ENCODE measurements at regions of chr1 and their contacts with region 1.

Region 1: DNA sequence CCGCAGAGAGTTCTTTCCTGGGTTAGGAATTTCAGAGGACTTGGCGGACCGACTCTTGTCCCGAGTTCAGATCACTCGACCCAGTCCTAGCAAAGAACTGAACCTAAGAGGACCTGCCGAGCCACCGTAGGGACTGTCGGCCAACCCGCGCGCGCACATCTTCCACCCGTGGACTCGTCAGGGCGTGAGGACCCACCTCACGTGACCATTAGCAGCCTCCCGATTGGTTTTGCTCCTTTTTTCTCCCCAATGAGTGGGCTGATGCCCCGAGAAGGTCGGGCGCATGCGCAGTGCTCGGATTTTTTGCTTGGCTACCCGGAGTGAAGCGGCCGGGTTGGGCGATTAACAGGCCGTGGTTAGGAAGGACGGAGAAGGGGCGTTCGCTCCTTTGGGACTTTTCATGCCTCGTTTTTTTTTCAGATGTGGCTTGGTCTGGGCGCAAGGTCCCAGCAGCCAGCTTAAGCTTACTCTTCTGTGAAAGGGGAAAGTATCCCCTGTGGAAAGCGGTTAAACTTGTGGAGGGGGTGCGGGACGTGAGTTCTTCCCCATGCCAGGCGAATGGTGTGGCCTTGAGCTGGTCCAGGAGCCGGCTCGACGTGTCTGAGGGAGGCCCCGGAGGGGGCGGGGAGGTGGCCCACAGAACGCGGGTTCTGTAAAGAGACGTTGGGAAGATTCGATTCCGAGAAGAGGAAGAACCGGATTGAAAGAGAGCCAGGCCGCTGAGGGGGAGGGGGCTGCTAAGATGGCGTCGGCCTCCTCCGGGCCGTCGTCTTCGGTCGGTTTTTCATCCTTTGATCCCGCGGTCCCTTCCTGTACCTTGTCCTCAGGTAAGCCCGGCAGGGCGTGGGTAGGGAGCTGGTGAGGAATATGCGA is at the start of gene PIP5K1A:
- DNase-seq: peak; percentile 94
- ATAC-seq: peak; percentile 93
- H3K4me3 Mint-ChIP-seq: peak within 1 kb of the TSS; percentile 99
- H3K27ac Mint-ChIP-seq: peak within 1 kb of the TSS; percentile 98
- H3K4me1 Mint-ChIP-seq: peaks cover 47% of the 10 kb centered on the region
- H3K27me3 Mint-ChIP-seq: no peaks in the 10 kb centered on the region
- CTCF ChIP-seq: no peak
- total RNA-seq, gene PIP5K1A: 63.2 and 77.7 TPM in 2 replicates

Region 2: GRCh38 chr1:150876119-150876454 is 322.4 kb before region 1 on chr1:
- CTCF ChIA-PET with region 1: no interaction called
- POLR2A ChIA-PET with region 1: no interaction called
- intact Hi-C with region 1: loop called (anchors 1 kb)
- DNase-seq: no peak
- ATAC-seq: peak; percentile 32
- H3K4me3 Mint-ChIP-seq: peak overlapping the region; percentile 92
- H3K27ac Mint-ChIP-seq: peak overlapping the region; percentile 88
- H3K4me1 Mint-ChIP-seq: peaks cover 31% of the 10 kb centered on the region
- H3K27me3 Mint-ChIP-seq: no peaks in the 10 kb centered on the region
- CTCF ChIP-seq: no peak

Region 3: GRCh38 chr1:151222130-151222529 is 23.6 kb after region 1 on chr1:
- CTCF ChIA-PET with region 1: no interaction called
- POLR2A ChIA-PET with region 1: interaction called, 10 read pairs
- intact Hi-C with region 1: no loop called
- DNase-seq: no peak
- ATAC-seq: no peak
- H3K4me3 Mint-ChIP-seq: no peak overlapping the region
- H3K27ac Mint-ChIP-seq: no peak overlapping the region
- H3K4me1 Mint-ChIP-seq: peaks cover 5% of the 10 kb centered on the region
- H3K27me3 Mint-ChIP-seq: no peaks in the 10 kb centered on the region
- CTCF ChIP-seq: no peak

Region 4: DNA sequence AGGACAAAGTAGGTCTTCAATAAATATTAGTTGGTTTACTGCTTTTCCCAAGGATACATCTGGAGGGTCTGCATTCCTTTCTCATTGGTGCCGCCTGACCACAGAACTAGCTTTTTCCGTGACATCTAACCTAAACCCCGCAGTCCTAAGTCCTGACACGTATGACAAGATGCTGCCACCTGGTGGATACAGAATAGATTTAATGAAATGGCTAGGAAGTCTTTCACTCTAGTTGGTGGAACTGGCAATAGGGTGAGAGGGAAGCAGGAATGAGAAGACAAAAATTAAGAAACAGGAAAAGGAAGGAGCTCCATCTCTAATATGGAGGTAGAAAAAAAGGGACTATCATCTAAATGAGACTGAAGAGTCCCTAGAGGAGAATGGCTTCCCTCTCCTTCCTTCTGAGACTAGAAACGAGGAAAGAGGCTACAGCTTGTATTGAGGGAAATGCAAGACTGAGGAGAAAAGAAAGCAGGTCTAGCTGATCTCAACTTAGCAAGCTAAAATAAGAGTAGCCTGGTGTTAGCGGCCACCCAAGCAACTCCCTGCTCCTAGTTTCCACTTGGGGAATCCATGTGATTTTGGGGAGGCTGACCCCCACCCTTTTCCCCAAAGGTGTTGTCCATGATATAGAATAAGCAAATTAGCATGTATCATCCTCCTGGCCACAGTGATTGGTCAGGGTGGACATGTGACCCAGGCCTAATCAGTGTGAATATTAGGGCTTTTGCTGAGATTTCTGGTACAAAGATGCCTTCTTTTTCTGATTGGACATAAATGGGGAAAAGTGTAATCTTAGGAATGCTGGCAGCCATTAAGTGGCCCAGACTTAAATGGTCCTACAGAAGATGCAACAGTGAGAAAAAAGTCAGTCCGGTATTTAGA is 142.6 kb after region 1 on chr1:
- CTCF ChIA-PET with region 1: interaction called, 3 read pairs
- POLR2A ChIA-PET with region 1: no interaction called
- intact Hi-C with region 1: loop called (anchors 1 kb)
- DNase-seq: no peak
- ATAC-seq: peak; percentile 86
- H3K4me3 Mint-ChIP-seq: no peak overlapping the region
- H3K27ac Mint-ChIP-seq: peak overlapping the region; percentile 100
- H3K4me1 Mint-ChIP-seq: peaks cover 47% of the 10 kb centered on the region
- H3K27me3 Mint-ChIP-seq: no peaks in the 10 kb centered on the region
- CTCF ChIP-seq: no peak

Region 5: GRCh38 chr1:151399890-151400495 is 201.5 kb after region 1 on chr1:
- CTCF ChIA-PET with region 1: no interaction called
- POLR2A ChIA-PET with region 1: interaction called, 6 read pairs
- intact Hi-C with region 1: loop called (anchors 1 kb)
- DNase-seq: no peak
- ATAC-seq: peak; percentile 3
- H3K4me3 Mint-ChIP-seq: peak overlapping the region; percentile 89
- H3K27ac Mint-ChIP-seq: peak overlapping the region; percentile 98
- H3K4me1 Mint-ChIP-seq: peaks cover 31% of the 10 kb centered on the region
- H3K27me3 Mint-ChIP-seq: no peaks in the 10 kb centered on the region
- CTCF ChIP-seq: no peak

Measured in activated B cell treated with CpG ODN at 0.5 μM for 24 hours (primary cell).